H1 (cell line): ENCODE measurements at regions of chr9 and their contacts with region 1.

Region 1: GRCh38 chr9:97598461-97599288 is 34.5 kb downstream of the TSTD2 start:
- DNase-seq: peak; percentile 29 to 77
- H3K4me3 ChIP-seq: no peak overlapping the region
- H3K27ac ChIP-seq: no peak overlapping the region
- H3K4me1 ChIP-seq: peaks cover 0 to 5% (median 0%) of the 10 kb centered on the region in 4 experiments; a peak in 3 of 7 replicates
- H3K27me3 ChIP-seq: no peaks in the 10 kb centered on the region
- CTCF ChIP-seq: peak; percentile 70 to 92 (median 88)
- EP300 ChIP-seq: no peak
- POLR2A ChIP-seq: no peak
- RAD21 ChIP-seq: peak; percentile 84 to 87

Region 2: DNA sequence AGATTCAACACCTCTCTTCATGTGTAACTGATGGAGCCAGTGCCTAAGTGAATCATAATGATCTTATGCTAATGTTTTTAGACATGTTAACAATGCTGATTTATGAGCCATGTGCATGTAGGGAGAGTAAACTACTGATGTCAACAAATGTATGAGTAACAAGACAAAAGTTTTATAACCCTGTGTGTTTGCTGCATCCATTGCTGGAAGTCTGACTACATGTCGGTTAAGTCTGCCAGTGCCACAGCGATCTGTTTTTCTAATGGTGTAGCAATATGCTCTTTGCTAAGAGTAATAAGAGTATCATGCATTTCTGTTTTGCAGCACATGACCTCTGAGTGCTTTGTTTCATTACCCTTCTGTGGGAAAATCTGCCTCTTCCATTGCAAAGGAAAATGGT is 123.6 kb before region 1 on chr9:
- CTCF ChIA-PET with region 1: interaction called, 574 read pairs
- POLR2A ChIA-PET with region 1: interaction called, 9 read pairs
- DNase-seq: no peak
- H3K4me3 ChIP-seq: no peak overlapping the region
- H3K27ac ChIP-seq: no peak overlapping the region
- H3K4me1 ChIP-seq: no peaks in the 10 kb centered on the region
- H3K27me3 ChIP-seq: no peaks in the 10 kb centered on the region
- CTCF ChIP-seq: no peak
- EP300 ChIP-seq: no peak
- POLR2A ChIP-seq: no peak
- RAD21 ChIP-seq: no peak

Region 3: DNA sequence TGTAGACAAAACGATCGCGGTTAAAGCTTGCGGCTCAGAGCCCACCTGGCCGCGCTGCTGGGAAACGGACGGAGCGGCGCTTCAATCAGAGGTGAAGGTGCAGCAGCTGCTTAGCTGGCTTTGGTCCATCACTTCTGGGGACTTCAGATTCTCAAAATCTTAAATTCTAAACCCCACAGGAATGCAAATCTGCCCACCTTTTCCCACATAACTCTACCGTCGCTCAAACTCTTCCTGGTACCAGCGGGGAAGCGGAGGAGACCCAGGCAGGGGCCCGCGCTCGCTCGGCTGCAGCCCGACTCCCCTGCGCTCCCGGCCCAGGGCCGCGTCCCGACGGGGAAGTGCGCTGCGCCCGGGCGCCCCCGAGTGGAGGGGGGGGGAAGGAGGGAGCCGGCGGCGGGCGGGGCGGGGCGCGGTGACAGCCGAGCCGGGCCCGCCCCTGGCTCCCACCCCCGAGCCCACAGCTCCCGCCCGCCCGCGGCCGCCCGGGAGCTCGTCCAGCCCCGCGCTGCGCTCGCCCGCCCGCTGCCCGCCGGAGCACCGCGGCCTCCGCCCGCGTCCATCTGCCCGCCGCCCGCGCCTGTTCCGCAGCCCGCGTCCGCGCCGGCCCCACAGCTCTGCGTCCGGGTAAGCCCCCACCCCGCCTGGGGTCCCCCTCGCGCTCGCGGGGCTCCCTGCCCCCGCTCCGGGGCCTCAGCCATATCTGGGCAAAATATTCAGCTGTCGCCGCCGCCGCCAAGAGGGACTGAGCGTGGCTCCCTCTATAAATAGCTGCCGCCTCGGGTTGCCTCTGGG is 97.3 kb before region 1 on chr9 and contains the start of gene TMOD1:
- CTCF ChIA-PET with region 1: interaction called, 39 read pairs
- POLR2A ChIA-PET with region 1: interaction called, 6 read pairs
- DNase-seq: peak in 1 of 2 experiments; percentile 80
- H3K4me3 ChIP-seq: peak within 1 kb of the TSS; percentile 50 to 69 (median 60)
- H3K27ac ChIP-seq: no peak within 1 kb of the TSS
- H3K4me1 ChIP-seq: peaks cover 0 to 6% (median 5%) of the 10 kb centered on the region in 4 experiments; a peak in 5 of 7 replicates
- H3K27me3 ChIP-seq: peaks cover 39 to 60% (median 50%) of the 10 kb centered on the region in 4 experiments
- CTCF ChIP-seq: peak in 2 of 3 experiments; percentile 14 to 15; a peak in 2 of 4 replicates
- EP300 ChIP-seq: no peak
- POLR2A ChIP-seq: no peak
- RAD21 ChIP-seq: no peak
- total RNA-seq, gene TMOD1: 0.88 and 1.1 TPM in 2 replicates

Region 4: DNA sequence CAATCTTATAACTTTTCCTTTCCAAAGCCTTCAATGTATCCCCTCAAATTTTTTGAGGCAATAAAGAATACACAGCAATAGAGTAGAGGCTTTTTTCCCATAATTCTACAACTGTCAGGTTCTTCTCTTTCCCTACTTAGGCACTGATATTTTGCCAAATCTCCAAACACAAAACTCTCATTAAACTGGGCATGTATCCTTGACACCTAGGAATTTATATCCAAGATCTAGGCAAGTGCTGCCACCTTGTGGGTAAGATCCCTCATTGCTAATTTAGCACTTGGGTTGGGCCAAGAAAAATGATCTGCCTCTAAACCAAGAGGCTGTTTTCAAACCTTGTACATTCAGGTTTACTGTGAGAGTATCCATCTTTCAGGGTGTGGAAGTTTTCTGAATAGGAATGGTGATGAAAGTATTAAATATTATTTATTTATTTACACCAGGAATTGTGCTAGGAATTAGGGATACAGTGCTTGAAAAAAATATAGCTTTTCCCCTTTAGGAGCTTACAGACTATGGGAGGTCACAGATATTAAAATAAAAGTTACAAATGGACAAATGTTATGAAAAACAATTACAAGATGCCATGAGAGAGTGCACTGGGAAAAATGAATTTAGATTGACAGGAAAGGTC is 16.9 kb after region 1 on chr9:
- CTCF ChIA-PET with region 1: interaction called, 123 read pairs
- POLR2A ChIA-PET with region 1: interaction called, 5 read pairs
- DNase-seq: peak in 1 of 2 experiments; percentile 66
- H3K4me3 ChIP-seq: no peak overlapping the region
- H3K27ac ChIP-seq: no peak overlapping the region
- H3K4me1 ChIP-seq: no peaks in the 10 kb centered on the region
- H3K27me3 ChIP-seq: no peaks in the 10 kb centered on the region
- CTCF ChIP-seq: peak in 2 of 3 experiments; percentile 69 to 83; a peak in 3 of 4 replicates
- EP300 ChIP-seq: no peak
- POLR2A ChIP-seq: no peak
- RAD21 ChIP-seq: peak; percentile 76 to 84

Region 5: DNA sequence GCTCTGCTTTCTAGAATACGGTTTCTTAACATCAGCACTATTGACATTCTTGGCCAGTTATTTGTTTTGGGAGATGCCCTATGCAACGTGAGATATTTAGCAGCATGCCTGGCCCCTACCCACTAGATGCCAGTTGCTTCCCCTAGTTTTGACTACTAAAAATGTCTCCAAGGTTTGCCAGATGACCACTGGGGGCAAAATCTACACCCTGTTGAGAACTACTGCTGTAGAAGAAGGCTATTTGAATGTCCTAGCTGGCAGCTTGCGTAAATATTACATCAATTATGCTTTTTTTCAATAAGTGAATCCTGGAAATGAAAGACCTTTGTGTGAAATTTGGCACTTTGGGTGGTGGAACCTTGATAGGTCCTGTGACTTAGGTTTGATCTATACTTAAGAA is 40.0 kb after region 1 on chr9:
- CTCF ChIA-PET with region 1: no interaction called
- POLR2A ChIA-PET with region 1: no interaction called
- DNase-seq: no peak
- H3K4me3 ChIP-seq: no peak overlapping the region
- H3K27ac ChIP-seq: no peak overlapping the region
- H3K4me1 ChIP-seq: peaks cover 0 to 5% (median 0%) of the 10 kb centered on the region in 4 experiments; a peak in 3 of 7 replicates
- H3K27me3 ChIP-seq: no peaks in the 10 kb centered on the region
- CTCF ChIP-seq: peak in 1 of 3 experiments; percentile 39; a peak in 1 of 4 replicates
- EP300 ChIP-seq: no peak
- POLR2A ChIP-seq: no peak
- RAD21 ChIP-seq: no peak